Psoas muscle (tissue), 8 donors: ENCODE measurements at regions of chr11 and their contacts with region 1.

Region 1: DNA sequence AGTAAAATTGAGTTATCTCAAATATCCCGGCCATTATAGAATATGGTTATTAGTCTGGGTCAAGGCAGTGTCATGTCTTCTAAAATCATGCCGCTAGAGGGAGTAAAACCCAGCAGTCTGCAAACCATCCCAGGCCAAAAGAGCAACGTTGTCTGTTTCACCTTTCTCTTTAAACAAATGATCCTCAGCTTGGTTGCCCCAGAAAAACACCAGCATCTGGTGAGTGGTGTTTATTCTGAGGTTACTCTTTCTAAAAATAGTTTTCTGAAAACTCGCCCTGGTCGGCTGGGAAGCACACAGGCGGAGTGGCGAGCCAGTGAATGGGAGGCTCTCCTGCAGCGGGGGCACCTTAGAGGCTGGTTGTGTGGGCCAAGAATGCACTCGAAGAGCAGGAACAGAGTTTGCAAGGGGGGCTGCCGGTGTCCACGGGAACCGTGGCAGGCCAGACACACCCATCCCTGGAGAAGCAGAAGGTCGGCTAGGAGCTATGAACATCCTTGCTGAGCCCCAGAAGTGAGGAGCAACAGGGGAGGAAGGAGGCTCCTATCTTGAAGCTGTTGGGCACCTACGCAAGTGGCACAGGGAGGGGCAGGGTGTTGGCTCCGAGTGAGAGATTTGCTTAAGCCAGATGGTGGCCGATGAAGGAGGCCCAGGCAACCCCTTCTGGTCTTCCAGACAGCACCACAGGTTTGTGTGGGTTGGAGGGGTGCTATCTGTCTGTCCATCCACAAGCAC is 297.1 kb downstream of the ETS1 start:
- DNase-seq: peak; percentile 34 to 59
- ATAC-seq: peak; percentile 88 to 97 (median 92)
- H3K4me3 ChIP-seq: peak overlapping the region; percentile 48
- H3K27ac ChIP-seq: peak overlapping the region; percentile 59
- H3K4me1 ChIP-seq: peaks cover 6% of the 10 kb centered on the region
- H3K27me3 ChIP-seq: no peaks in the 10 kb centered on the region
- CTCF ChIP-seq: peak; percentile 91

Region 2: DNA sequence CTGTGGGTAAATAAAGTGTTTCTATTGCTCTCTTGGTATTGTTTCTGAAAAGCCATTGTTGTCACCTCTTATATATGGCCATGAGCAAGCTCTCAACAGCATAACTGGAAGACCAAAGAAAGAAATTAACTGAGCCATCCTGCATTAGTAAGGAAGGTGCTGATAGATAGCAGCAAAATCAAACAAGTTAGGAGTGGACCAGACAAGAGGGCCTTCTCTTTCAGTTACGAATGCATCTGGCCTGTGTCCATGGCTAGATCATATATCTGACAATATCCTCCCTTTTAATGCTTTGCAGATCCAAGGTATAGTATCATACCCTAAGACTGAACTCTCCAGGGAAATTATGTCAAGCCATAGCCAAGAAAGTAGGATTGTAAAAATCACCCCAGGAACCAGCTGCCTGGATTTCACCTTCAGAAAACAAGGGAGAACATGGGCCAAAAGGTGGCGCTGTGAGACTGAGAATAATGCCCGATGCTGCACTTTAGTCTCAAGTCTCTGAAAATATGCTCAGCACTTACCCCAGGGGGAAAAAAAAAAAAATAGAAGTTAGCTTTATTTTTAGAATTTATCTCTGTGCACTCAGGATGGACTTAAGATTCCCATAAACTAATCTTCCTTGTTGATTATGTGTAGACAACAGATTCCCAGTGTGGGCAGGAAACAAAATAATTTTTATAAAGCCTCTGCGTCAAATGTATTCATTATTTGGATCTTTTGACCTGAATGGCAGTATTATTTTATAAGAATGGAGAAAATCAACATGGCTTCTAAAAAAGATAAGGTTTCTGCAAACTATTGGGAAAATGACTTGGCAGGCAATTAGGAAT is 118.0 kb before region 1 on chr11:
- intact Hi-C with region 1: loop called in 1 of 2 experiments (anchors 5 kb)
- DNase-seq: peak; percentile 74 to 84
- ATAC-seq: peak in 3 of 4 donors; percentile 57 to 86 (median 65)
- H3K4me3 ChIP-seq: no peak overlapping the region
- H3K27ac ChIP-seq: no peak overlapping the region
- H3K4me1 ChIP-seq: no peaks in the 10 kb centered on the region
- H3K27me3 ChIP-seq: peaks cover 0 to 5% (median 4%) of the 10 kb centered on the region in 3 donors
- CTCF ChIP-seq: peak; percentile 76

Region 3: GRCh38 chr11:128210148-128210940 is 79.9 kb before region 1 on chr11:
- intact Hi-C with region 1: no loop called
- DNase-seq: no peak
- ATAC-seq: peak; percentile 80 to 91 (median 82)
- H3K4me3 ChIP-seq: no peak overlapping the region
- H3K27ac ChIP-seq: peak overlapping the region; percentile 19
- H3K4me1 ChIP-seq: no peaks in the 10 kb centered on the region
- H3K27me3 ChIP-seq: no peaks in the 10 kb centered on the region
- CTCF ChIP-seq: no peak

Region 4: DNA sequence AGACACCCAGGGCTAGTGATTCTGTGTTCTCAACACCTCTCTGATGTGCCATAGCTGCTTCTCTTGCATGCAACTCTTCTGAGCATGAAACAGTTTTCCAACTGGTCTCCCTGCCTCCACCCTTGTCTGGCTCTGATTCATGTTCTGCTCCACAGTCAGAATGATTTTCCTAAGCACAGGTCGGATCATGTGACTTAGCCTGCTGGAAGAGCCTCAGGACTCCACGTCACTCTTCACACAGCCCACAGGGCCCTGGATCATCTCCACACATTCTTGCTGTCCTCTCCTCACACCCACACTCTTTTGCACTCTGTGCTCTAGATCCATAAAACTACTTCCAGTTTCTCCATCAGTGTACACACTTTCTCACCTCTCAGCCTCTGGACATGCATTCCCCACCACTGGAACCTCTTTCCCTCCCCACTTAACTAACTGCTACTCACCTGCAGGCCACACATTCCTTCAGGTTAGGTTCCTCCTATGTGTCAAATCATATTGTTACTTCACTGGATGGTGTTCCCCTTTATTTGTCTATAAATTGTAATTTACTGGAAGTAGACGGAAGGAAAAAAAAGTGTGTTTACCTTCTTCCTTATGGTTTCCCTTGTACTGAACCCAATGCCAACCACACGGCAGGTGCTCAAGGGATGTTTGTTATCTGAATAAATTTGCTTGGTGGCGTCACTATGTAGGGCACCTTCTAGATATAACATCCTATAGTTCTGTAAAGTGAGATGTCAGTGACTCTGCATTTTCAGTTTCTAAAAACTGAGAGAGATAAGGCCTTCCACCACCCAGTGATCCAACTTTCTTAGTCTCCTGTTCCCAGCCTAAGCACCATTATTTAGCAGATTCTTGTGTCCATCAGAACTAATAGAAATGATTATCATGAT is 163.4 kb after region 1 on chr11:
- intact Hi-C with region 1: loop called in 1 of 2 experiments (anchors 10 kb)
- DNase-seq: peak; percentile 73 to 78
- ATAC-seq: peak; percentile 59 to 84 (median 74)
- H3K4me3 ChIP-seq: no peak overlapping the region
- H3K27ac ChIP-seq: no peak overlapping the region
- H3K4me1 ChIP-seq: peaks cover 18% of the 10 kb centered on the region
- H3K27me3 ChIP-seq: no peaks in the 10 kb centered on the region
- CTCF ChIP-seq: no peak

Region 5: GRCh38 chr11:128467610-128468041 is 177.4 kb after region 1 on chr11:
- intact Hi-C with region 1: loop called in 1 of 2 experiments (anchors 10 kb)
- DNase-seq: peak; percentile 49 to 60
- ATAC-seq: peak; percentile 85 to 92 (median 90)
- H3K4me3 ChIP-seq: no peak overlapping the region
- H3K27ac ChIP-seq: peak overlapping the region; percentile 51
- H3K4me1 ChIP-seq: peaks cover 23% of the 10 kb centered on the region
- H3K27me3 ChIP-seq: no peaks in the 10 kb centered on the region
- CTCF ChIP-seq: no peak

Region 6: DNA sequence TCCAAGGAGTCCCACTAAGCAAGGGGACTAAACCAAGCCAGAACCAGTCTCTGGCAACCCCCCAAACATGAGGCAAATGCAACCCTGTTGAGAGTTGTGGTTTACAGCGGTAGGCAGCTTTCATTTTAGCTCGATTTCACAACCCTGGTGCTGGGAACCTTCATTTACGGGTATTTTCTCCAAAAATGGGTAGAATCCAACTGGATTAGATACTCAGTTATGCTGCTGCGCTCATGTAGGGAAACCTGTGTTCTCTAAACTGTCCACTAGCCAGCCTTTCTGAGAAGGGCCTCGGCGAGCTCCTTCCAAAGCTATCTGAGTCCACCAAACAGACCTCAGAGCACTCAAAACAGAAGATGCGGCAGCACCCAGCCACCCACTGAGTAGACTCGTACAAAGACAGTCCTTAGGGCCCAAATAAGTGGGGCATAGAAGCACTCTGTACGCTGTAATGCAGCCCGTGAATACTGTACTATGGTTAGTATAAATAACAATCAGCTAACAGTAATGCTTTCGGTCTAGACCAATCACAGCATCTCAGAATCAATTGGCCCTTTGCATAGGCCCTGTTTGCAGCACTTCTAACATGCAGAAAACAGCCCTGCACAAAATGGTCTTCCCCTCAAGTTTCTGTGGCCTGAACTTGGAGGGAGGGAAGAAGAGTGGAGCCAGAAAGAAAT is 192.4 kb after region 1 on chr11:
- intact Hi-C with region 1: no loop called
- DNase-seq: peak; percentile 67 to 70
- ATAC-seq: peak; percentile 64 to 78 (median 73)
- H3K4me3 ChIP-seq: peak overlapping the region; percentile 45
- H3K27ac ChIP-seq: peak overlapping the region; percentile 57
- H3K4me1 ChIP-seq: peaks cover 39% of the 10 kb centered on the region
- H3K27me3 ChIP-seq: no peaks in the 10 kb centered on the region
- CTCF ChIP-seq: no peak

Region 7: DNA sequence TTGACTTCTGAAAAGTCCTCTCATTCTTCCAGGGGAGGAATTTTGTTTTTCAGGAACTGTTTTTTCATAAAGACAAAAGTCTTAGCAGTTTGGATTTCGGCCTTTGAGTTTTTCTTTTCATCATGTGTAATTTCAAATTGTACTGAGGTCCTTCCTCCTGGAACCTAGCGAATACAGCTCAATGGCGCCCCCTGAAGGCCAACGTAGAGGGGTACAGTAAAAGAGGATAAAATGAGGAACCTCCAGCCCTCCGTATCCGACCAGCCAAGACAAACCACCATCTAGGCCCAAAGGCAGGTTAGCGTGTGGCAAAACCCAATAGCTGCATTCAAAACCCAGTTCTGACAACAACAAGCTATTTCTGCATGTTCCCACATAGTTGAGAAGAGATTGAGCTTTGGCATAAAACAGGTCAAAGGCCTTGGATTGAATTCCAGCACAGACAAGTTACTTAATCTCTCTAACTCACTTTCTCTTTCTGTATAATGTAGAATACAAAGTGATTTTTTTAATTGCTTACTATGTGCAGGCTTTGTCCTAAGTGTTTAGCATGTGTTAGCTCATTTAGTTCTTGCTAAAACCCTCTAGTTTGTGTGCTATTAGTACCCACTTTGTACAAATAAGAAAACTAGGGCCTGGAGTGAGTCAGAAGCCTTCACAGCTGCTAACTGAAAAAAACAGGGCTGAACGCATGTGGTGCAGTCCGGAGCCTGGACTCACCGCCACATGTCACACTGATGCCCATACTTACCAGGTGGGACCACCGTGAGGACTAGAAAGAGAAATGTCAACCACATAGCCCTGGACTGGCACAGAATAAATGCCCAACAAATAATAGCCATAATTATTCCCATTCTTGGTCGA is 340.3 kb after region 1 on chr11:
- intact Hi-C with region 1: loop called (anchors 1 to 2 kb)
- DNase-seq: peak; percentile 89 to 93
- ATAC-seq: peak; percentile 89 to 98 (median 92)
- H3K4me3 ChIP-seq: no peak overlapping the region
- H3K27ac ChIP-seq: no peak overlapping the region
- H3K4me1 ChIP-seq: peaks cover 10% of the 10 kb centered on the region
- H3K27me3 ChIP-seq: no peaks in the 10 kb centered on the region
- CTCF ChIP-seq: peak; percentile 92

Region 8: GRCh38 chr11:128824191-128825049 is 534.1 kb after region 1 on chr11:
- intact Hi-C with region 1: loop called in 1 of 2 experiments (anchors 10 kb)
- DNase-seq: no peak
- ATAC-seq: no peak
- H3K4me3 ChIP-seq: peak overlapping the region; percentile 34
- H3K27ac ChIP-seq: no peak overlapping the region
- H3K4me1 ChIP-seq: no peaks in the 10 kb centered on the region
- H3K27me3 ChIP-seq: peaks cover 0 to 7% (median 0%) of the 10 kb centered on the region in 3 donors
- CTCF ChIP-seq: no peak

Region 9: GRCh38 chr11:128831174-128832120 is 541.2 kb after region 1 on chr11:
- intact Hi-C with region 1: loop called (anchors 5 to 10 kb)
- DNase-seq: peak; percentile 78 to 87
- ATAC-seq: peak; percentile 76 to 92 (median 82)
- H3K4me3 ChIP-seq: no peak overlapping the region
- H3K27ac ChIP-seq: no peak overlapping the region
- H3K4me1 ChIP-seq: no peaks in the 10 kb centered on the region
- H3K27me3 ChIP-seq: no peaks in the 10 kb centered on the region
- CTCF ChIP-seq: peak; percentile 88